CD8-positive, alpha-beta memory T cell (primary cell): ENCODE measurements at regions of chr1 and their contacts with region 1.

Region 1: DNA sequence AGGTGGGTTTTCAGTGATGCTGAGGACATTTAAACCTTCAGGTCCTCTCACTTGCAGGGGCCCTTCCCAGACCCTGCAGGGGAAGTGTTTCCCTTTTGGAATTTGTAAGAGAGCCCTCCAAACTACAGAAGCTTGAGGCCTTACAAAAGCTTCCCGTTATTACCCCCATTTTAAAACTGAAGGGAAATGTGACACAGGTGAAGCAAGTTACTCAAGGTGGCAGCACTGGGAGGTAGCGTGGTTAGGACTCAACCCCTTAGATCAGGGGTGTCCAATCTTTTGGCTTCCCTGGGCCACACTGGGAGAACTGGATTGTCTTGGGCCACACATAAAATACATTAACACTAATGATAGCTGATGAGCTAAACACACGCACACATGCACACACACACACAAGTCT is 15.9 kb upstream of the ZC3H12A start:
- DNase-seq: no peak
- H3K4me3 ChIP-seq: no peak overlapping the region
- H3K4me3 Mint-ChIP-seq: no peak overlapping the region
- H3K27ac ChIP-seq: no peak overlapping the region
- H3K27ac Mint-ChIP-seq: peak overlapping the region in 2 of 8 donors; percentile 33 to 64
- H3K4me1 ChIP-seq: peaks cover 3% of the 10 kb centered on the region
- H3K4me1 Mint-ChIP-seq: peaks cover 6 to 11% (median 9%) of the 10 kb centered on the region in 3 donors
- H3K27me3 ChIP-seq: no peaks in the 10 kb centered on the region
- H3K27me3 Mint-ChIP-seq: no peaks in the 10 kb centered on the region

Region 2: DNA sequence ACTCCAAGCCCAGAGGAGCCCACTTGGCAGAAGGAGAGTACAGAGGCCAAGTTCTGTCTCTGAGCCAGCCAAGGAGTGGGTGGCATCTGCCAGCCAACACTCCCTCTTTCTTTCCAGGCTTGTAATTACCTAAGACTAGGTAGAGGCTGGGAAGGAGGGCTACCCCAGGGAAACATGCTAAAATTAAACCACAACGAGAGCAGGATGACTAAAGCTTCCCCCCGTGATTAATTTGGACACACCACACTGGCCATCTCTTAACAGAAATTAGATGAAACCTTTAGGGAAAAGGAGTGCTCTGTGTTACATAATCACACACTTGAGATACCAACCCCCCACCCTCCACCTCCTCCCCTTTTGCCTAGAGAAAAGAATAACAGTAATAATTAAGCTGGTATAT is 86.2 kb before region 1 on chr1:
- CTCF ChIA-PET with region 1: no interaction called
- POLR2A ChIA-PET with region 1: no interaction called
- DNase-seq: no peak
- H3K4me3 ChIP-seq: no peak overlapping the region
- H3K4me3 Mint-ChIP-seq: no peak overlapping the region
- H3K27ac ChIP-seq: no peak overlapping the region
- H3K27ac Mint-ChIP-seq: no peak overlapping the region
- H3K4me1 ChIP-seq: no peaks in the 10 kb centered on the region
- H3K4me1 Mint-ChIP-seq: no peaks in the 10 kb centered on the region
- H3K27me3 ChIP-seq: no peaks in the 10 kb centered on the region
- H3K27me3 Mint-ChIP-seq: peaks cover 12 to 20% of the 10 kb centered on the region in 2 donors

Region 3: DNA sequence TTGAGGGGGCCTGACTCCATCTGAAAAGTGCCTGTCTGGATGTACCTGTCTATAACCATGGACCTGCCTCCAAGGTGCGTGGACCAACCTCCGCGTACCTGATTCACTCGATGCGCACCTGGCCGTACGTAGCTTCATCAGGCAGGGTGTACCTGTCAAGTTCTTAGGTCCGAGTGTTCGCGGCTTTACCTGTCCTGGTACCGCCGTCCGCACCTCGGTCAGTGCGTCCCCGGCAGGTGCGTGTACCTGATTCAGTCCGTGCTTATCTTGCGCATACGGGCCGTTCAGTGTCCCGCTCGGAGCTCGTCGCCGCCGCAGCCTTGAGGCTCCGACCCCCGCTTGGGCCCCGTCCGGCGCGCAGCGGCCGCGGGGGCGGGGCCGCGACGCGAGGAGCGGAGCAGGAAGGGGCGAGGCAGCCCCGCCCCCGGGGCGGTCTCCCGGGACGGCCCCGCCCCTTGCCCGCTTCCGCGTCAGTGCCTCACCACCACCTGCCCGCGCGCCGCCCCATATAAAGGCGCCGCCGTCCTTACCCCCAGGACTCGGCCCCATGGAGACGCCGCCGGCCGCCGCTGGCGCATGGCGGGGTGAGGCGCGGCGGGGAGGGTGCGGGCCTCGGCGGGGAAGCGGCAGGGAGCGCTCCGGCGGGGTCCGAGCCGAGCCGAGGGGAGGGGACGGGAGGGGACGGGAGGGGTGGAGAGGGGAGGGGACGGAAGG is 15.7 kb after region 1 on chr1 and contains the start of gene ZC3H12A:
- CTCF ChIA-PET with region 1: interaction called, 105 read pairs
- POLR2A ChIA-PET with region 1: interaction called, 4 read pairs
- DNase-seq: peak; percentile 89 to 95 (median 93)
- H3K4me3 ChIP-seq: peak within 1 kb of the TSS; percentile 99
- H3K4me3 Mint-ChIP-seq: peak within 1 kb of the TSS; percentile 93 to 98 (median 95)
- H3K27ac ChIP-seq: peak within 1 kb of the TSS; percentile 98
- H3K27ac Mint-ChIP-seq: peak within 1 kb of the TSS; percentile 97 to 100 (median 99)
- H3K4me1 ChIP-seq: peaks cover 55% of the 10 kb centered on the region
- H3K4me1 Mint-ChIP-seq: peaks cover 54 to 57% (median 54%) of the 10 kb centered on the region in 3 donors
- H3K27me3 ChIP-seq: no peaks in the 10 kb centered on the region
- H3K27me3 Mint-ChIP-seq: peaks cover 0 to 3% of the 10 kb centered on the region in 2 donors
- total RNA-seq, gene ZC3H12A: 32.7 to 33.8 TPM

Region 4: GRCh38 chr1:37498872-37499617 is 40.5 kb after region 1 on chr1:
- CTCF ChIA-PET with region 1: interaction called, 12 read pairs
- POLR2A ChIA-PET with region 1: no interaction called
- DNase-seq: no peak
- H3K4me3 ChIP-seq: no peak overlapping the region
- H3K4me3 Mint-ChIP-seq: no peak overlapping the region
- H3K27ac ChIP-seq: no peak overlapping the region
- H3K27ac Mint-ChIP-seq: peak overlapping the region in 5 of 8 donors; percentile 14 to 70 (median 56)
- H3K4me1 ChIP-seq: no peaks in the 10 kb centered on the region
- H3K4me1 Mint-ChIP-seq: peaks cover 11 to 25% (median 22%) of the 10 kb centered on the region in 3 donors
- H3K27me3 ChIP-seq: no peaks in the 10 kb centered on the region
- H3K27me3 Mint-ChIP-seq: no peaks in the 10 kb centered on the region